BJ (cell line): ENCODE measurements at regions of chr22 and their contacts with region 1.

Region 1: GRCh38 chr22:23113067-23113846 is 28.5 kb downstream of the RSPH14 start:
- DNase-seq: no peak
- H3K4me3 ChIP-seq: no peak overlapping the region
- H3K27me3 ChIP-seq: no peaks in the 10 kb centered on the region
- CTCF ChIP-seq: no peak

Region 2: DNA sequence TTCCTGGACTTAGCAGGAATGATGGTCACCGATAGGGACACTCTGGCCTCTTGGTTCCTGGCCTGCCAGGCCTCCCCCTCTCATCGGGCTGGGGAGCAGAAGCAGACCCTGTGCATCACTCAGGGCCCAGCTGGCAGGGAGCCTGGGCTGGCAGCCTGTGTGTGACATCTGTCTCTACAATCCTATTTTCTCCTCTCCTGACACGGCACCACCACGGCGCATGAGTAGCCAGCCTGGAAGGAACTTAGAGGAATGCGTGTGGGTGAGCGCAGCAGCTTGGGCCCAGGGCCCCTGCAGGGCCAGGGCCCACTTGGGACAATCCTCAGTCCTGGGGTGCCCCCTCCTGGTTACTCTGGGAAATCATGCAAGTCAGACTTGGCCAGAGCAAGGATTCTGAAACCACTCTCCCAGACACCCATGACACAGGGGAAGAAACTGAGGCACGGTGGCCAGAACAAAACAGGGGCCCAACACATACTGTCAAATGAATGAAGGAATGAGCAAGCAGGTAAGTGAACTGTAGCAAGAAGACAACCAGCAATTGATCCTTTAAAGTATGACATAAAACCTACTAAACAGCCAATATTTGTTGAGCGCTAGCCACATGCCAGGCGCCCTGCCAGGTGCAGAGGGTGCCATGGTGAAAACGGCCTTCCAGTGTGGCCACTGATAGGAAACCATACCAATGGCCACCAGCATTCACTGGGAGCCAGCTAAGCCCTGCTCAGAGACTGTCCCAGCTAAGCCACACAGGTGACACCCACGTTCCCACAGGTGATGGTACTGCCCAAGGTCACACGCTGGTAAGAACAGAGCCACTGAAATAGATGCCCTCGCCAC is 15.2 kb after region 1 on chr22:
- CTCF ChIA-PET with region 1: interaction called, 16 read pairs
- POLR2A ChIA-PET with region 1: no interaction called
- DNase-seq: peak; percentile 26
- H3K4me3 ChIP-seq: no peak overlapping the region
- H3K27me3 ChIP-seq: 0 out of 2 replicates have a peak, but pooled peaks cover 2% of the 10 kb centered on the region
- CTCF ChIP-seq: peak; percentile 76